ENCODE measurements at regions of chr11 and their contacts with region 1.

Region 1: DNA sequence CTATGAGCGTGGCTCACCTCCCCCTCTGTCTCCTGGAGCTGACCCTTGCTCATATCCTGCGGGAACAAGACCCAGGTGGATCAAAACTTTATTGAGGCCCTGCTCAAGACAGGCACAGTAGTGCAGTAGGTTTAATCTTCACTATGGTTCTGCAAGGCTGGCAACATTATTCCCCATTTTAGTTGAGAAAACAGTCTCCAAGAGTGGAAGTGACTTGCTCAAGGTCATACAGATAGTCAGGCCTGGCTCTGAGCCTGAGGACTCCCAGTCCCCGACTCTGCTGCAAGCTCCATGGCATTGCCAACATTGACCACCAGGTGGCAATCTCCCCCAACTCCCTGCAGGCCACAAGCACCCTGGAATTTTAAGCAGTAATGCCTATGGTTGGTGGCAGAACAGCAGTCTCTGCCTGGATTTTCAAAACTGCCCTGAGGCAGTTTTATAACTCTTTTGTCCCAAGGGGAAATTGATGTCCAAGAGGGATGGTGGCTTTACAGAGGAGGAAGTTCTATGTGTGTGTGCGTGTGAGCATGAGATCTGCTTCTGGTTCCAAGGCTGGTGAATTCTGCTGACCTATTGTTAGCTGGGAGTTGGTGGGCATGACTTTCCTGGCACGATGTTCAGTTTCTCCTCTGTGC is 34.1 kb downstream of the NEU3 start:
- DNase-seq: peak; percentile 83 to 95
- H3K4me3 ChIP-seq: no peak overlapping the region
- H3K27ac ChIP-seq: no peak overlapping the region
- H3K4me1 ChIP-seq: no peaks in the 10 kb centered on the region; a peak in 2 of 7 replicates
- H3K27me3 ChIP-seq: no peaks in the 10 kb centered on the region
- CTCF ChIP-seq: peak; percentile 93 to 98 (median 98)
- EP300 ChIP-seq: no peak
- POLR2A ChIP-seq: no peak
- RAD21 ChIP-seq: peak; percentile 93 to 97

Region 2: GRCh38 chr11:74929431-74930363 is 93.2 kb before region 1 on chr11:
- CTCF ChIA-PET with region 1: interaction called, 21 read pairs
- POLR2A ChIA-PET with region 1: no interaction called
- DNase-seq: peak in 1 of 2 experiments; percentile 66
- H3K4me3 ChIP-seq: no peak overlapping the region
- H3K27ac ChIP-seq: no peak overlapping the region
- H3K4me1 ChIP-seq: no peaks in the 10 kb centered on the region
- H3K27me3 ChIP-seq: no peaks in the 10 kb centered on the region
- CTCF ChIP-seq: peak in 2 of 3 experiments; percentile 77 to 81; a peak in 3 of 4 replicates
- EP300 ChIP-seq: no peak
- POLR2A ChIP-seq: no peak
- RAD21 ChIP-seq: peak; percentile 82 to 90

Region 3: DNA sequence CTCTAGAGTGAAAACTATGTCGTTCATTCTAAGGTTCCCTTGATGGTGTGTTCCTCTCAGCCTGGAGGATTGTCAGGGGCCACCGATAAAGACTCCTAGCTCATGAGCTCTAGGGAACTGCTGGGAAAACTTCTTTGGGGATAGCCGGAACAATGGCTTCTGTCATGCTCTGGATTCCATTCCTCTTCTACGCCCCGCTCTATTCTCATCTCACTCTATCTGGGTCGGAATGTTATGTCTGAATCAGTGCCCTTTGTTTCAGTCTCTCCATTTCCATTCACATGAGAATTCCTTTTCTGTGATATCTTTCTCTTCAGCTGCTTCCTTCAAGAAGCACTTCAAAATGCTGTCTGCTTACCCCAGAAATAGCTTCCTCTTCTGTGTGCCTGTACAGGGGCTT is 111.1 kb after region 1 on chr11:
- CTCF ChIA-PET with region 1: interaction called, 142 read pairs
- POLR2A ChIA-PET with region 1: no interaction called
- DNase-seq: no peak
- H3K4me3 ChIP-seq: no peak overlapping the region
- H3K27ac ChIP-seq: no peak overlapping the region
- H3K4me1 ChIP-seq: peaks cover 0 to 5% (median 0%) of the 10 kb centered on the region in 4 experiments; a peak in 1 of 7 replicates
- H3K27me3 ChIP-seq: no peaks in the 10 kb centered on the region
- CTCF ChIP-seq: no peak
- EP300 ChIP-seq: no peak
- POLR2A ChIP-seq: no peak
- RAD21 ChIP-seq: no peak

Region 4: GRCh38 chr11:75204685-75205563 is 182.0 kb after region 1 on chr11:
- CTCF ChIA-PET with region 1: interaction called, 43 read pairs
- POLR2A ChIA-PET with region 1: no interaction called
- DNase-seq: peak; percentile 58 to 97
- H3K4me3 ChIP-seq: no peak overlapping the region
- H3K27ac ChIP-seq: no peak overlapping the region
- H3K4me1 ChIP-seq: 0 out of 7 replicates have a peak, but pooled peaks cover 0 to 2% (median 0%) of the 10 kb centered on the region in 4 experiments
- H3K27me3 ChIP-seq: no peaks in the 10 kb centered on the region; a peak in 1 of 7 replicates
- CTCF ChIP-seq: peak; percentile 90 to 97 (median 93)
- EP300 ChIP-seq: no peak
- POLR2A ChIP-seq: no peak
- RAD21 ChIP-seq: peak; percentile 91 to 96

Region 5: GRCh38 chr11:75248690-75249268 is 225.9 kb after region 1 on chr11:
- CTCF ChIA-PET with region 1: interaction called, 32 read pairs
- POLR2A ChIA-PET with region 1: no interaction called
- DNase-seq: peak; percentile 80 to 93
- H3K4me3 ChIP-seq: no peak overlapping the region
- H3K27ac ChIP-seq: no peak overlapping the region
- H3K4me1 ChIP-seq: no peaks in the 10 kb centered on the region
- H3K27me3 ChIP-seq: peaks cover 0 to 9% (median 4%) of the 10 kb centered on the region in 4 experiments; a peak in 6 of 7 replicates
- CTCF ChIP-seq: peak; percentile 96 to 100 (median 100)
- EP300 ChIP-seq: peak in 1 of 2 experiments; percentile 61; a peak in 1 of 3 replicates
- POLR2A ChIP-seq: no peak
- RAD21 ChIP-seq: peak; percentile 100

Measured in H1 (cell line).